Activated CD4-positive, alpha-beta T cell treated with anti-CD3 and anti-CD28 coated beads for 36 hours (primary cell): ENCODE measurements at regions of chr6 and their contacts with region 1.

Region 1: DNA sequence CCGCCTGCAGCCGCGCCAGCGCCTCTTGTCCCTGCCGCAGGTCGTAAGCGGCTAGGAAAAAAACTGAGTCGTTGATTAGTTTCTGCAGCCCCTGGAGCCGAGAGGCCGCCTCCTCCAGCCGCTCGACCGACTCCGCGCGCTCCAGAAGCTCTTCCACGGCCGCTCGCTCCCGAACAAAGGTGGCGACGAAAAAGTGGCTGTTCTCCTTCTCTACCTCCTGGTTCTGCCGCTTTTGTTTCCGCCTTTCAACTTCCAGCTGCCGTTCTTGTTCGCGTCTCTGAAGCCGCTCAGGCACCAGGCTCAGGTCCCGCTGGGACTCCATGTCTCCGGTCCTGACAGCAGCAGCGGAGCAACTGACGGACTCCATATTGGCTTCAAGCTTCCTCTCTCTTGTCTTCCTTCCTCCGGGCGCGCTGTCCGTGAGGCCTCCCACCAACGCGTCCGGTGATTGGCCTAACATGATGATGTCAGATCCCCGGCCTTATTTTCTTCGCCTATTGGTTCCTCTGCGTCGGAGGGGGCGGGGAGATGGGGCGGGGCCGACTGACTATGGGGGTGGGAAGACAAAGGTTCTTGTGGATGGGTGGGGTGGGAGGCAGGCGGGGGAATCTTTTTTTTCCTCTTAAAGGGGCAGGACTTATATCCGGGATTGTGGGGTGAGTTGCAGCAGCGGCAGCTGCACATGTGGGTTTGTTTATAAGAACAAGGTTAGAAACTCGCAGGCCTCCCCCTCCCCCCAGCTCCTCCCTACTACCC is at the start of gene TBCC:
- DNase-seq: peak; percentile 97
- ATAC-seq: peak; percentile 84
- H3K4me3 Mint-ChIP-seq: peak within 1 kb of the TSS; percentile 84
- H3K27ac Mint-ChIP-seq: peak within 1 kb of the TSS; percentile 100
- H3K4me1 Mint-ChIP-seq: peaks cover 27% of the 10 kb centered on the region
- H3K27me3 Mint-ChIP-seq: no peaks in the 10 kb centered on the region
- total RNA-seq, gene TBCC: 14.7 to 15.3 TPM

Region 2: GRCh38 chr6:41920921-41921711 is 824.8 kb before region 1 on chr6 and contains the starts of genes BYSL and MED20:
- CTCF ChIA-PET with region 1: no interaction called
- POLR2A ChIA-PET with region 1: no interaction called
- intact Hi-C with region 1: loop called in 1 of 2 experiments (anchors 1 kb)
- DNase-seq: peak; percentile 96
- ATAC-seq: peak; percentile 83
- H3K4me3 Mint-ChIP-seq: peak within 1 kb of the TSS; percentile 99
- H3K27ac Mint-ChIP-seq: peak within 1 kb of the TSS; percentile 98
- H3K4me1 Mint-ChIP-seq: peaks cover 49% of the 10 kb centered on the region
- H3K27me3 Mint-ChIP-seq: no peaks in the 10 kb centered on the region
- total RNA-seq, gene BYSL: 51.6 to 56.0 TPM
- total RNA-seq, gene MED20: 19.4 to 21.6 TPM

Region 3: DNA sequence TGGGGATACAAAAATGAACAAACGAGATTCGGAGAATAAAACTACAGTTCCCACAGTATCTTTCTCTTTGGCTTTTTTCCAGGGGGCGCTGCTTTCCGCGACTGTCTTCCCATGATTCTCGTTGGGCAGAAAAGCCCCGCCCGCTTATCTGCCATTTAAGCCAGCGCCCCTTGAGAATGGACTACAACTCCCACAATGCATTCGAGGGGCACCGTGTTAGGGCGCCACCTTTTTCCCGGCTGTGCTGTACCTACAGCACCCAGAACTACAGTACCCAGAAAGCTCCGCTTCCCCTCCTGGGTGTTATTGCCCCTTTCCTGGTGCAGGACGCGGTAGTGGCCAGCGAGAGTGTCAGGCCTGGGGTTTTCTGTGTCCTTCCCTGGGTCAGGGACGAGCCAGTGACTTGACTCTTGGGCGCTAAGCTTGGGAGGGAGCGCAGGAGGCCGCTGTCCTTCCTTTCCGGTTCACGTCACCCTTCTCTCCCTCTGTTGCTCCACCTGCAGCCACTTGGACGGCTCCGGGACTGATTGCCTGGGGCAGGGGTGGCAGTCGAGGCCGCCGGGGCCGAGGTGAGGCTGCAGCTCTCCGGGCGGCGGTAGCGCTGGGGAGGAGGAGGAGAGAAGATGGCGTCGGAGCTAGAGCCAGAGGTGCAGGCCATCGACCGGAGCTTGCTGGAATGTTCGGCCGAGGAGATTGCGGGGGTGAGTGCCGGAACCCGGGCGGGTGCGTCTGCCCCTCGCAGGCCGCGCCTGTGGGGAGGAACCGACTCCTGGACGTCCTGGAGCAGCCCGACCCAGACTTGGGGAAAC is 182.0 kb before region 1 on chr6 and contains the start of gene UBR2:
- CTCF ChIA-PET with region 1: interaction called, 4 read pairs
- POLR2A ChIA-PET with region 1: interaction called, 4 read pairs
- intact Hi-C with region 1: loop called in 1 of 2 experiments (anchors 1 kb)
- DNase-seq: peak; percentile 97
- ATAC-seq: peak; percentile 97
- H3K4me3 Mint-ChIP-seq: peak within 1 kb of the TSS; percentile 97
- H3K27ac Mint-ChIP-seq: peak within 1 kb of the TSS; percentile 95
- H3K4me1 Mint-ChIP-seq: peaks cover 31% of the 10 kb centered on the region
- H3K27me3 Mint-ChIP-seq: no peaks in the 10 kb centered on the region
- total RNA-seq, gene UBR2: 23.9 to 28.1 TPM

Region 4: GRCh38 chr6:42777126-42777822 is 31.4 kb after region 1 on chr6:
- CTCF ChIA-PET with region 1: interaction called, 5 read pairs
- POLR2A ChIA-PET with region 1: interaction called, 33 read pairs
- intact Hi-C with region 1: loop called in 1 of 2 experiments (anchors 1 kb)
- DNase-seq: no peak
- ATAC-seq: no peak
- H3K4me3 Mint-ChIP-seq: no peak overlapping the region
- H3K27ac Mint-ChIP-seq: peak overlapping the region; percentile 79
- H3K4me1 Mint-ChIP-seq: peaks cover 67% of the 10 kb centered on the region
- H3K27me3 Mint-ChIP-seq: no peaks in the 10 kb centered on the region

Region 5: DNA sequence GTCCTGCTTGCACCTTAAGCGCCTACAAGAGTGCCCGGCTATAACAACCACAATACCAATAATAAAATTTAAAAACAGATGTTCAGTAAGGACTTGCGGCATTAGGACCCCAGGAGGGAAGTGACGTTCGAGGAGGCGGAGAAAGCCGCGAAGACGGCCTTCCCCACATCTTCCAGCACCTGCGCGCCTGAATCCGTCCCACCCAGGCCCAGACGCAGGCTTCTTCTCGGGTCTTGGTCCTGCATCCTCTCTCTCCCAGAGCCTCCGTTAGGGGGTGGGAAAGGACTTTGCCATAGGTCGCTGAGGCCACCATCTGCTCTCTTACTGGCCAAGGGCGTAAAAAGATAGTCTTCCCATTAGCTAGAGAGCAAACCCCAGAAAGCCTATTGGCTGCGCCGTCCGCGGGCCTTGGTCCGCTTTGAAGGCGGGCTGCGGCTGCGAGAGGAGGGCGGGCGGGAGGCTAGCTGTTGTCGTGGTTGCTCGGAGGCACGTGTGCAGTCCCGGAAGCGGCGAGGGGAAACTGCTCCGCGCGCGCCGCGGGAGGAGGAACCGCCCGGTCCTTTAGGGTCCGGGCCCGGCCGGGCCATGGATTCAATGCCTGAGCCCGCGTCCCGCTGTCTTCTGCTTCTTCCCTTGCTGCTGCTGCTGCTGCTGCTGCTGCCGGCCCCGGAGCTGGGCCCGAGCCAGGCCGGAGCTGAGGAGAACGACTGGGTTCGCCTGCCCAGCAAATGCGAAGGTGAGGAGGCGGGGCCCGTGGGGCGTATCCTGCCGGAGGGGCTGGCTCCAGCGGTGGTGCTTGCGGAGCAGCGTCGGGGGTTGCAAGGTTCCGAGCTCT is 183.3 kb after region 1 on chr6 and contains the start of gene CNPY3:
- CTCF ChIA-PET with region 1: no interaction called
- POLR2A ChIA-PET with region 1: interaction called, 13 read pairs
- intact Hi-C with region 1: loop called in 1 of 2 experiments (anchors 1 kb)
- DNase-seq: peak; percentile 98
- ATAC-seq: peak; percentile 88
- H3K4me3 Mint-ChIP-seq: peak within 1 kb of the TSS; percentile 84
- H3K27ac Mint-ChIP-seq: peak within 1 kb of the TSS; percentile 93
- H3K4me1 Mint-ChIP-seq: peaks cover 40% of the 10 kb centered on the region
- H3K27me3 Mint-ChIP-seq: no peaks in the 10 kb centered on the region
- total RNA-seq, gene CNPY3: 33.0 to 34.3 TPM

Region 6: DNA sequence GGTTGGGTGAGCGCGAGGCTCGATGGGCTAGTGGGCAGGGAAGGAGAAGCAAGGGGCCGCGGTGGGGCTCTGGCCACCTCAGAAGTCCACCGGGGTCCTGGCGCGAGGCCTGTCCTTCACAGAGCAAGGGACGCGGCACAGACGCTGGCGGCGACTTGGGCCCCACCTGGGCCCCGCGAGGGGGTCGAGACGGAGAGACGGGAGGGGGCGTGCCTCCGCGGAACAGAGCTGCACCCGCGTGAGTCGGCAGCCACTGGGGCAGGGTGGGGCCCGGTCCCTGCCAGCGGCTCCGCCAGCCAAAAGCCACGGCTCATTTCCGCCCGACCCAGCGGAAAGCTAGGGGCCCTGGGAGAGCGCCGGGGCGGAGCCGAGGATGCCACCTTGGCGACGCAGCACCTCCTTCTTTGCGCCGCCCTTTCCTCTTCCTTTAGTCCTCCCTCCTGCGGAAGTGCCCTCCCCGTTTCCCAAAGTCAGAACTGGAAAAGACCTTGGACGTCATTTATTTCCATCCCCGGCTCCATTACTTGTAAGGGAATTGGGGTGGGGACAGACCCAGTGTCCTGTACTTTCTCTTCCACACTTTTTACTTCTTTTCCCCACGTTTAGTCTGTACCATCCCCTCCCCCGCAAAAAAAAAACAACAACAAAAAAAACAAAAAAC is 307.8 kb after region 1 on chr6 and contains the start of gene CUL7:
- CTCF ChIA-PET with region 1: no interaction called
- POLR2A ChIA-PET with region 1: no interaction called
- intact Hi-C with region 1: loop called in 1 of 2 experiments (anchors 1 kb)
- DNase-seq: peak; percentile 96
- ATAC-seq: peak; percentile 99
- H3K4me3 Mint-ChIP-seq: peak within 1 kb of the TSS; percentile 99
- H3K27ac Mint-ChIP-seq: peak within 1 kb of the TSS; percentile 97
- H3K4me1 Mint-ChIP-seq: peaks cover 43% of the 10 kb centered on the region
- H3K27me3 Mint-ChIP-seq: no peaks in the 10 kb centered on the region
- total RNA-seq, gene CUL7: 16.3 to 18.0 TPM